ENCODE measurements at regions of chr10 and their contacts with region 1.

Region 1: DNA sequence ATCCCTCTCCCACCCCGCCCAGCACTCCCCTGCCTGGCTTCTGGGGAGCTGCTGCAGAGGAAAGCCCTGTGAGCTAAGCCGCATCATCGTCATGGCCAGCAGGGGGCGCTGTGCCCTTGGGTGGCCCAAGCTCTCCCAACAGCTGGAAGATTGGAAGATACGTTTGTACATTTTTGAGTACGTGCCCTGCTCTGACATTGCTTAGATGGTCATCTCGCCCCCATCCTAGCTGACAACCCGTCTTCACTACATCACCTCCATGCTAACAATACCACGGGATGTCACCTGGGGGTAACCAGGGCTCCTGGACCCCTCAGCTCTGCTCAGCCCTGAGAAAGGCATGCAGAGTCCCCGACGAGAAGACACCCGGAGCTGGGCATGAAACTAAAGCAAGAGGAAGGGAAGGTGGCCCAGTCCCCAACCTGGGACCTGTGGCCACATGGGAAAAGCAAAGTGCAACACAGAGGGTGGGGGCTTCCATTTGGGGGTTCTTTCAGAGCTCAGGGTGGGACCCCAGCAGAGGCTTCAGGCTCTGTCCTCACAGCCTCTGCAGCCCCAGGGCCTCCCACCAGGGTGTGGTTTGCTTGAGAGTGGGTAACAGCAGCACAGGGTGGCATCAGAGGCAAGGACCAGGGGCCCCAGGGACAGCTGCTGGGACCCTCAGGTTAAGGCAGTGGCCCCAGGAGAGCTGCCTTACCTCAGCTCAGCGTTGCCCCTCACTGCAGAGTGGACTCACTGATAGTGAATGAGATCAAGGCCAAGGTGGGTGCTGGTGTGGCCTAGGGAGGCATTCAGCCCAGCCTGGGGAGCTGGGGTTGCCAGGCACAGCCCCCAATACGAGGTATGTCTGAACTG is 136.7 kb downstream of the PTPN20 start:
- DNase-seq: no peak
- H3K4me3 ChIP-seq: no peak overlapping the region
- H3K27me3 ChIP-seq: no peaks in the 10 kb centered on the region
- CTCF ChIP-seq: peak; percentile 91

Region 2: DNA sequence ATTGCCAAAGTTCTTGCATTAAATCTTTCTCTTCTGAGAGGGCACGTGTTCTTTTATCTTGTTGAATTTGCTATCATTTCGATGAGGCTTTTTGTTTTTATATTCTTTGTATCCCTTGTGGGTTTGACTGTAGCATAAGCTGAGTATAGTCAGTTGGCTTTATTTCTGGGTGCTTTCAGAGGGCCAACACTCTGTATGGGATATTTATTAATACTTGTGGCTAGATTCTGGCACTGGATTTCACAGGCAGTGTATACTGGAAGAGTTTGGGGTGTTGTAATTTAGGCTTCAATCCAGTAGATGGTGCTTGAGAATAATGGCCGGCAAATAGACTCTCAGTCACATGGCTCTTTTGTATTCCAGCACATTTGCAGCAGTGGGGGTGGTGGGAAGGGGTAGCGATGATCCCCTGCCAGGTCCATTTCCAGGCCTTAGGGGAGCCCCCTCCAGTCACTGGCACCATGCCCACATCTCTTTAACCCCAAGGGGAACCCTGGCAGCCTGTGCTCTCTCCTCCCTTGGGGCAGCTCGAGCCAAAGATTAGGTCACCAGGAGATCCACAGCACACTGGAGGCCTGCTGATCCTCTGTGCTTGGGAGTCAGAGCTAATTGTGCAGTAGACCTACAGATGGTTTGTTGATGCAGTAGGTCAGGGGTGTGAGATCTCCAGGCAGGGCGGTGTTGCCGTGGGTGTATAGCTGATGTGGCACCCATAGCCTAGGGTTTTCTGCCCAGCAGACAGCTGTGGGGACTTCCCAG is 54.9 kb before region 1 on chr10:
- CTCF ChIA-PET with region 1: interaction called, 10 read pairs
- POLR2A ChIA-PET with region 1: no interaction called
- DNase-seq: no peak
- H3K4me3 ChIP-seq: no peak overlapping the region
- H3K27me3 ChIP-seq: no peaks in the 10 kb centered on the region; the same call in 1 of the 2 replicates
- CTCF ChIP-seq: peak; percentile 49

Region 3: GRCh38 chr10:47031211-47031900 is 16.5 kb before region 1 on chr10:
- CTCF ChIA-PET with region 1: interaction called, 32 read pairs
- POLR2A ChIA-PET with region 1: no interaction called
- DNase-seq: no peak
- H3K4me3 ChIP-seq: no peak overlapping the region
- H3K27me3 ChIP-seq: no peaks in the 10 kb centered on the region
- CTCF ChIP-seq: no peak

Region 4: GRCh38 chr10:47165711-47166524 is 118.0 kb after region 1 on chr10:
- CTCF ChIA-PET with region 1: interaction called, 10 read pairs
- POLR2A ChIA-PET with region 1: no interaction called
- DNase-seq: peak; percentile 51
- H3K4me3 ChIP-seq: no peak overlapping the region
- H3K27me3 ChIP-seq: no peaks in the 10 kb centered on the region
- CTCF ChIP-seq: no peak

Region 5: GRCh38 chr10:47300429-47300931 is 252.6 kb after region 1 on chr10:
- CTCF ChIA-PET with region 1: interaction called, 11 read pairs
- POLR2A ChIA-PET with region 1: no interaction called
- DNase-seq: no peak
- H3K4me3 ChIP-seq: no peak overlapping the region
- H3K27me3 ChIP-seq: peaks cover 20% of the 10 kb centered on the region
- CTCF ChIP-seq: no peak

Measured in BJ (cell line).